Upper lobe of right lung (tissue), 1 donor: ENCODE measurements at regions of chr10 and their contacts with region 1.

Region 1: GRCh38 chr10:4767033-4767814 is 58.8 kb upstream of the AKR1E2 start:
- DNase-seq: no peak
- ATAC-seq: peak; percentile 67
- H3K4me3 ChIP-seq: no peak overlapping the region
- H3K27ac ChIP-seq: no peak overlapping the region
- H3K4me1 ChIP-seq: no peaks in the 10 kb centered on the region
- H3K27me3 ChIP-seq: no peaks in the 10 kb centered on the region
- CTCF ChIP-seq: peak; percentile 77

Region 2: DNA sequence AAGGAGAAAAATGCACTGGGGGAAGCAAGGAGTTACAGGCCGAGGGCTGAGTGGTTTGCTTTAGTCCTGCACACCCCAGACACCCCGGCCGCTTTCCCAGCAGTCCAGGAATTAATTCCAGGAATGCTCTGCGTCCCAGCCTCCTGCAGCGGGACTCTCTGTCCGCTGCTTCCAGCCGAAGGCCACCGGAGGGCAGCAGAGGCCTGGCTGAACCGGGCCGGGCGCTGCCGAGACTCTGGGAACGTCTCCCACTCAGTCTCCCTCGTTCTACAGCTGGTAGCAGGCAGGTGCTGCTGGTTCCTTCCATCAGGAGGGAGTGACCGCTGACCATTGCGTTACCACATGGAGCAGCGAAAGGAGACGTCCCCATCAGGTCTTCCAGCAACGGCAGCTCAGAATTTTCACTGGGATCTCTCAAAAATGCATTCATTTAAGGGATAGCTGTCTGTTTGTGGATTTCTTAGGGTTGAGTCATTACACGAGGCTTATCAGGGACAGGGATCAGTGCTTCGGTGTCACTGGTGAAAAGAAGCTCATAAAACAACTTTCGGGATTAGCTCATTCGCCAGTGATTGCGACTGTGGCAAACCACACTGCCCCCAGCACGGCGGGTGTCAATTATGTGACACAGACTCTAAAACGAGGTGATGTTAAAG is 1569.7 kb before region 1 on chr10:
- intact Hi-C with region 1: loop called (anchors 10 kb)
- DNase-seq: peak; percentile 88
- ATAC-seq: peak; percentile 95
- H3K4me3 ChIP-seq: peak overlapping the region; percentile 30
- H3K27ac ChIP-seq: no peak overlapping the region
- H3K4me1 ChIP-seq: peaks cover 24% of the 10 kb centered on the region
- H3K27me3 ChIP-seq: peaks cover 7% of the 10 kb centered on the region
- CTCF ChIP-seq: peak; percentile 90

Region 3: DNA sequence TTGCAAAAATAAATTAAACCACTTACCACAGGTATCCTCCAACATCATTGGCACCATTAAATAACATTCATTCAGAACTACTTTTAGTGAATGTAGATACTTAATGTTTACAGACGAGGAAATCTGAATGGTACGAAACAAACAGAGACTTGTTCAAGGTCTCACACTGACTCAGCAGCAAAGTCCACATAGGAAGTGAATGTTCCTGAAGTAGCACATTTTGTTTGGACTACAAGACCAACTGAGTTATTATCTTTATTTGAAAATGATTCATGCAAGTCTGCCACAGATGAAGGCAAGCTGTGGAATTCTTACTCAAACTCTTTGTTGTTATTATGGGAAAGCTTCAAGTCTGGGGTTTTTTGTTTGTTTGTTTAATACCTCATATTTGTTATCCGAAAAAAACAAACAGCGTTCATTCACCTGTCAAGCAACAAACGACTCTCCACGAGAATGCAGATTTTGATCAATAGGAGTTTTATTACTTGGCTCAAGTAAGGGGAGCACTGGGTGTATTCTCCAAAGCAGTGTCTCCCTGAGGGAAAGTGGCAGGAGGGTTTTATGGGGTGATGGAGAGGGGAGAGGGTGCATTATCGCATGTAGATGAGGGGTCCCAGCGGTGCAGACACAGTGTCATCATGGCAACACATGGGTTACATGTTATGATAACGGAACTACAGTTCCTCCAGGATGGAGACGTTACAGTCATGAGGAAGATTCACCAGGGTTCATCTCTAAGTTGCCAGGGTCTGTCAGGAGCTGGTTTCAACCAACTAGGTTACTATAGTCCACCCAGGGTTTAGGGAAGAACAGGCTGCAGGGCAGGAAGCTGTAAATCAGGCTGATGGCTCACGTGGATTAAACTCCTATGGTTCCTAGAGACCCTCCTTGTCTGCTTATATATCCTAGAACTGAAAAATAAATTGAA is 88.9 kb before region 1 on chr10:
- intact Hi-C with region 1: no loop called
- DNase-seq: no peak
- ATAC-seq: peak; percentile 62
- H3K4me3 ChIP-seq: no peak overlapping the region
- H3K27ac ChIP-seq: peak overlapping the region; percentile 60
- H3K4me1 ChIP-seq: peaks cover 7% of the 10 kb centered on the region
- H3K27me3 ChIP-seq: no peaks in the 10 kb centered on the region
- CTCF ChIP-seq: no peak

Region 4: GRCh38 chr10:4725917-4726606 is 41.2 kb before region 1 on chr10:
- intact Hi-C with region 1: no loop called
- DNase-seq: no peak
- ATAC-seq: no peak
- H3K4me3 ChIP-seq: no peak overlapping the region
- H3K27ac ChIP-seq: no peak overlapping the region
- H3K4me1 ChIP-seq: no peaks in the 10 kb centered on the region
- H3K27me3 ChIP-seq: no peaks in the 10 kb centered on the region
- CTCF ChIP-seq: no peak